Activated CD8-positive, alpha-beta T cell treated with anti-CD3 and anti-CD28 coated beads for 36 hours (primary cell): ENCODE measurements at regions of chr9 and their contacts with region 1.

Region 1: GRCh38 chr9:70392189-70392588 is 22.3 kb downstream of the KLF9 start:
- DNase-seq: peak; percentile 26
- ATAC-seq: peak; percentile 59
- H3K4me3 Mint-ChIP-seq: no peak overlapping the region
- H3K27ac Mint-ChIP-seq: no peak overlapping the region
- H3K4me1 Mint-ChIP-seq: peaks cover 81% of the 10 kb centered on the region
- H3K27me3 Mint-ChIP-seq: no peaks in the 10 kb centered on the region
- CTCF ChIP-seq: peak; percentile 38

Region 2: DNA sequence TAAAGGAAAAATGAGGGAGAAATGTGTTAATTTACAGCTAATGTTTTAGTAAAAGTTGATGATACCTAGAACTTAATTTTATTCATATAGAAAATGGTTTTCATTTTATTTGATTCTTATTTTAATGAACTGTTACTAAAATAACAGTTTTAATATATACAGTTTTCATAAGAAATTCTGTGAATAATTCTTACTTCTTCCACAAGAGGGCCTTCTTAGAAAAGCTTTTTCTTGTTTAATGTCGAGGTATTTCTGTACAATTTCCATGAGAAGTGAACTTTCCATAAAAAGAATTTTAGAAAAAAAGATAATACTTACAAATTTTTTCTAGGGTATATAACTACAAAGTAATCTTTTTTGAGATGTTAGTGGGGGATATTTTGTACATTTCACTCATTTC is 51.6 kb before region 1 on chr9:
- CTCF ChIA-PET with region 1: interaction called, 16 read pairs
- POLR2A ChIA-PET with region 1: interaction called, 4 read pairs
- intact Hi-C with region 1: no loop called
- DNase-seq: no peak
- ATAC-seq: no peak
- H3K4me3 Mint-ChIP-seq: no peak overlapping the region
- H3K27ac Mint-ChIP-seq: no peak overlapping the region
- H3K4me1 Mint-ChIP-seq: peaks cover 2% of the 10 kb centered on the region
- H3K27me3 Mint-ChIP-seq: no peaks in the 10 kb centered on the region
- CTCF ChIP-seq: peak; percentile 69

Region 3: GRCh38 chr9:70374962-70375618 is 17.1 kb before region 1 on chr9:
- CTCF ChIA-PET with region 1: no interaction called
- POLR2A ChIA-PET with region 1: no interaction called
- intact Hi-C with region 1: no loop called
- DNase-seq: no peak
- ATAC-seq: no peak
- H3K4me3 Mint-ChIP-seq: no peak overlapping the region
- H3K27ac Mint-ChIP-seq: no peak overlapping the region
- H3K4me1 Mint-ChIP-seq: no peaks in the 10 kb centered on the region
- H3K27me3 Mint-ChIP-seq: no peaks in the 10 kb centered on the region
- CTCF ChIP-seq: no peak

Region 4: GRCh38 chr9:70406434-70406862 is 14.3 kb after region 1 on chr9:
- CTCF ChIA-PET with region 1: interaction called, 18 read pairs
- POLR2A ChIA-PET with region 1: interaction called, 8 read pairs
- intact Hi-C with region 1: no loop called
- DNase-seq: peak; percentile 76
- ATAC-seq: peak; percentile 81
- H3K4me3 Mint-ChIP-seq: peak overlapping the region; percentile 74
- H3K27ac Mint-ChIP-seq: peak overlapping the region; percentile 94
- H3K4me1 Mint-ChIP-seq: peaks cover 81% of the 10 kb centered on the region
- H3K27me3 Mint-ChIP-seq: no peaks in the 10 kb centered on the region
- CTCF ChIP-seq: no peak

Region 5: GRCh38 chr9:70494221-70494620 is 102.0 kb after region 1 on chr9:
- CTCF ChIA-PET with region 1: no interaction called
- POLR2A ChIA-PET with region 1: no interaction called
- intact Hi-C with region 1: no loop called
- DNase-seq: no peak
- ATAC-seq: no peak
- H3K4me3 Mint-ChIP-seq: no peak overlapping the region
- H3K27ac Mint-ChIP-seq: no peak overlapping the region
- H3K4me1 Mint-ChIP-seq: peaks cover 14% of the 10 kb centered on the region
- H3K27me3 Mint-ChIP-seq: peaks cover 7% of the 10 kb centered on the region
- CTCF ChIP-seq: no peak